Left colon (tissue), 2 donors: ENCODE measurements at regions of chr3 and their contacts with region 1.

Region 1: DNA sequence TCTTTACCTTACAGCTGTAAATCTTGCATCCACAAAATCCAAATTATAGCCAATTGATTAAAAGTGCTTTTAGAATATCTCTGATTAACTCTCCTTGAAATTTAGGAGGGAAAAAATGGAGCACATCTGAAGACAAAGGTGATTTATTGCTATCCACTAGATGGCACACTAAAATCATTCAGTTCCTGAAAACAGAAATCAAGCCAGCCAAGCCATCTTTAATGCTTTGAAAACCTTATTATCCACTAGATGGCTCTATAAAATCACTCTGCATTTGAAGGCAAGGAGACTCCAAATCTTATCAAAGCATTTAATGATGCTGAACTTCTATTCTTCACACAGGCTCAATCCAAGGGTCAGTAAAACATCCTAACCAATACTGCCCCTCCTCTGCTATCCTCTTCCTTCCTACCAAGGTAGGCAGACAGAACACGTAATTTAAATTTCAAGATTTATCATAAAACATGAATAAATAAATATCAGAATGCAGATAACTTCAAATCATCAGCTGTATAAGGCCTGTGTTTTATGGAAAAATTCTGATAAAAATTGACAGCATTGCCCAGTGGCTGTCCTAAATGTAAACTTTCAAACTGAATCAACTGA is 48.4 kb downstream of the GOLIM4 start:
- DNase-seq: no peak
- ATAC-seq: peak; percentile 75

Region 2: DNA sequence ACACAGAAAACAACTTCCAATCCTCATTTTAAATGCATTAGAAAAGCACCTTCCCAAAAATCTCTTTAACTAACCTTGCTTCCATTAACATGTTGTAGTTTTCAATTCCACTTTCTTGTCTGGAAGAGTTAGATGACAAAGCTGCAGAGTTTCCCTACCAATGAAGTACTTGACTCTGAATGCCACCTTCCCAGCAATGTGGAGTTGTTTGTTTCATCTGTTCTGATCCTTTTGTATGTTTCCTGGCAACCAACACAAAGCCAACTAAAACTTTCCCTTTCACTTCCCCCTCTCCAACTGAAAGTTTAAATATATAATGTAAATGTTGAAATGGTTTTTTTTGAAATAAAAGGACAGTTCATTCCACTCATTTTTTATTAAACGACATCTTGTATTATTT is 393.5 kb before region 1 on chr3 and contains the start of gene WDR49:
- intact Hi-C with region 1: no loop called
- DNase-seq: no peak
- ATAC-seq: no peak
- total RNA-seq, gene WDR49: 1.0 TPM in 1 of 2 donors, not detected in the other

Region 3: DNA sequence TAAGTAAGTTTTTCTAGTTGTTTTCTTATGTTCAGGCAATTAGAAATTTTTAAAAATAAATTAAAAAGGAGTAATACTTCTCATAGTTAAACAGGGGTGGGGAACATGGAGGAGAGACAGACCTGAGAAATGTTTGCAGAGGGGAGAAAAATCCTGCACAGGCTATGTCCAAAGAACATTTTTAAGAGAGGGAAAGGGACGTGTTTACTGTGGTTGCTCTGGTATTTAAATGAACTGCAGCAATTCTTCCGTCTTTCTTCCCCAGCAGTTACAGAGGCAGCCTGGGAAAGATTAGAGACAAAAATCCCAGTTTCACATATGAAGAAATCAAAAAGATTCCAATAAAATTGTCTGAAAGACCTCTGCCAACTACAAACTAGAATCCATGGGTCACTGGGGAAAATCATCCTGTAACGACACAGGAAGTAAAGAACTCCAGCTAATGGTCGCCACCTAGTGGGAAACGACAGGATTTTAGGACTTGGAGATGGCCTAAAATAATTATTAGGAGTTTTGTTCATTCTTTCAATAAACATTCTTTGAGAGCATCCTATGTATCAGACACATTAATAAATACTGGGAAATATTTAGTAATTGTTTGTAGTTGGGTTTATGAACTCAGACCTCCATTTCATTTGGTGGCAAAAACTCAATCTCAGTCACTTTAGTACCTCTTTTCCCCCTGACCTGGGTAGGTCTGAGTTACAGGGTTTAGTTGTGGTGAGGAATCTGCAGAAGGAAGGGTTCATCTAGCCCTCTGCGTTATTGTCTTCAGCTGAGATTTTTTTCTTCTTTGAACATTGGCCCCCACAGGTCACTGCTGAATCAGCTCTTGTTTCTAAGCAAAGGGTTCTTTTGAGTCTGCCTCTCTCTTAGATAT is 118.3 kb after region 1 on chr3:
- intact Hi-C with region 1: loop called (anchors 1 to 5 kb)
- DNase-seq: peak; percentile 35 to 64
- ATAC-seq: peak; percentile 82